Naive thymus-derived CD4-positive, alpha-beta T cell (primary cell): ENCODE measurements at regions of chr3 and their contacts with region 1.

Region 1: DNA sequence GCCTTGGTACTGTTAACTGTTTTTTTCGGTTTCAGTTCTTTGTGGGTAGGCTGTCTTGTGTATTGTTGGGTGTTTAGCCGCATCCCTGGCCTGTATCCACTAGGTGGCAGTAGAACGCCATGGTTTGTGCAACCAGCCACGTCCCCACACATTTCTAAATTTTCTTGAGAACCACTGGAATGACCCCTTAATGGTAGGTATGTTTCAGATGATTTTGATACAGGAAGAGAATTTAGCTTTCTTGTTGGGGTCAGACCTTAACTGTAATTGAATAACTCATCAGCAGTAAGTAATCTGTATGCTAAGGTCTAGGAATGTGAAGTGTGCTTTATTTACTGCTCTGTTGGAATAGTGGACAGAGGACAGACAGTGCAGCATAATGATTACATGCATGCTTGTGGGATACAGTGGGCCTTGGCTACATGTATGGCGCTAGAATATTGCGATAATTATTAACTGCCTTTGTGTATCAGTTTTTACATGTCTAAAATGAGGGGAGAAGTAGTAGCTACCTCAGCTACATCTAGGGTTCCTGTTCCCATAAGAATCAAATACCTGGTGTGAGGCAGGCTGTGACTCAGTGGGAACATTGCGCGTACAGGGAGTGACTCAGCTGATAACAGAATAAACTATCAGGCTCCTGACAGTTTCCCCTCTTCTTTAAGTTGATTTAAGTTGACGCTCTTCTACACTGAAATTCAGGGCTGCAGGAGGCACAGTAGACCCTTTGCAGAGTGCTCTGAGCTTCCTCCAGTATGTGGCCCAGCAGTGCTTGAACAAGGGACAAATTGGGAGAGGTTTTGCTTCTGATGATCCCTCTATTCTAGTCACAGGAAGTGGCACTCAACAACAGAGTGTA is 25.0 kb upstream of the GPR171 start:
- DNase-seq: peak; percentile 47 to 84 (median 77)
- ATAC-seq: peak; percentile 93
- H3K4me3 ChIP-seq: no peak overlapping the region
- H3K4me3 Mint-ChIP-seq: peak overlapping the region in 7 of 10 donors; percentile 6 to 68 (median 35)
- H3K27ac ChIP-seq: no peak overlapping the region
- H3K27ac Mint-ChIP-seq: peak overlapping the region in 8 of 9 donors; percentile 6 to 84 (median 51)
- H3K4me1 ChIP-seq: peaks cover 0 to 9% of the 10 kb centered on the region in 2 donors
- H3K4me1 Mint-ChIP-seq: peaks cover 19 to 63% (median 43%) of the 10 kb centered on the region in 7 donors
- H3K27me3 ChIP-seq: no peaks in the 10 kb centered on the region
- H3K27me3 Mint-ChIP-seq: no peaks in the 10 kb centered on the region

Region 2: GRCh38 chr3:151203051-151203420 is 25.0 kb before region 1 on chr3 and contains the start of gene GPR171:
- CTCF ChIA-PET with region 1: interaction called, 6 read pairs
- POLR2A ChIA-PET with region 1: interaction called, 3 read pairs
- intact Hi-C with region 1: loop called (anchors 1 kb)
- DNase-seq: peak in 8 of 9 donors; percentile 62 to 88 (median 82)
- ATAC-seq: peak; percentile 95
- H3K4me3 ChIP-seq: peak within 1 kb of the TSS; percentile 79
- H3K4me3 Mint-ChIP-seq: peak within 1 kb of the TSS; percentile 72 to 94 (median 84)
- H3K27ac ChIP-seq: peak within 1 kb of the TSS; percentile 75
- H3K27ac Mint-ChIP-seq: peak within 1 kb of the TSS; percentile 76 to 98 (median 94)
- H3K4me1 ChIP-seq: peaks cover 45 to 57% of the 10 kb centered on the region in 2 donors
- H3K4me1 Mint-ChIP-seq: peaks cover 34 to 82% (median 71%) of the 10 kb centered on the region in 7 donors
- H3K27me3 ChIP-seq: no peaks in the 10 kb centered on the region
- H3K27me3 Mint-ChIP-seq: no peaks in the 10 kb centered on the region
- total RNA-seq, gene GPR171: 16.0 to 251 (median 63.4) TPM

Region 3: DNA sequence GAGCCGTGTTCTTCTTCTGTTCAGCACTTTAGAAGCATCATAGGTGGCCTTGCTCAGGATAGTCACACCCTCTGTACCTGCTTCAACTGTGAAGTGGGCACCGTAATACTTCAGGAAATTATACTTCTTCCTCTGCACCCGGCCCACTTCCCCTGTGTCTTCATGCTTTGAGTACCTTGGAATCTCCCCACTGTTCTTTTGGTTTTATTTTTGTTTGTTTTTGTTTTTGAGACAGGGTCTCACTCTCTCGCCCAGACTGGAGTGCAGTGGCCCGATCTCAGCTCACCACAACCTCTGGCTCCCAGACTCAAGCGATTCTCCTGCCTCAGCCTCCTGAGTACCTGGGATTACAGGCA is 48.6 kb after region 1 on chr3:
- CTCF ChIA-PET with region 1: interaction called, 133 read pairs
- POLR2A ChIA-PET with region 1: interaction called, 39 read pairs
- intact Hi-C with region 1: loop called (anchors 1 kb)
- DNase-seq: peak in 8 of 9 donors; percentile 12 to 56 (median 25)
- ATAC-seq: peak; percentile 85
- H3K4me3 ChIP-seq: no peak overlapping the region
- H3K4me3 Mint-ChIP-seq: peak overlapping the region; percentile 8 to 76 (median 44)
- H3K27ac ChIP-seq: no peak overlapping the region
- H3K27ac Mint-ChIP-seq: peak overlapping the region; percentile 1 to 93 (median 67)
- H3K4me1 ChIP-seq: peaks cover 20 to 21% of the 10 kb centered on the region in 2 donors
- H3K4me1 Mint-ChIP-seq: peaks cover 21 to 63% (median 43%) of the 10 kb centered on the region in 7 donors
- H3K27me3 ChIP-seq: no peaks in the 10 kb centered on the region
- H3K27me3 Mint-ChIP-seq: no peaks in the 10 kb centered on the region

Region 4: DNA sequence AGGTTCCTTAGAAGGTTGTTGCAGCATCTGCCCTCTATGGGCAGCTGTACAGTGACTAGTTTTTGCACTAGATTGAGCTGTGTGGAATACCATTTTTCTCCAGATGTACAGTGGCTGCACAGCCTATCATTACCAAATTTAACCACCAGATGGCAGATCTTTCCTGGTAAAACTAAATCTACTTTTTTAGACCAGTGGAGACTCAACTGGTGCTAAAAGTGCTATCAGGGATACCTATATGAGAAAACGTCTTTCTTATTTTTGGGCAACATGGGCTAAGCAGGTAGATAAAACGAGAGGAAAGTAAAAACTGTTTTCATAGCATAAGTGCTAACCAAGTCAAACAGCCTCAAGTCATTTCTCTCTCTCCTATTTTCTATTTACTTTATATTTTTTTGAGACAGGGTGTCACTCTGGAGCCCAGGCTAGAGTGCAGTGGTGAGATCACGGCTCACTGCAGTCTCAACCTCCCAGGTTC is 211.7 kb after region 1 on chr3:
- CTCF ChIA-PET with region 1: no interaction called
- POLR2A ChIA-PET with region 1: no interaction called
- intact Hi-C with region 1: loop called (anchors 1 to 5 kb)
- DNase-seq: peak in 6 of 9 donors; percentile 18 to 33 (median 24)
- ATAC-seq: peak; percentile 65
- H3K4me3 ChIP-seq: no peak overlapping the region
- H3K4me3 Mint-ChIP-seq: no peak overlapping the region
- H3K27ac ChIP-seq: no peak overlapping the region
- H3K27ac Mint-ChIP-seq: no peak overlapping the region
- H3K4me1 ChIP-seq: no peaks in the 10 kb centered on the region
- H3K4me1 Mint-ChIP-seq: no peaks in the 10 kb centered on the region
- H3K27me3 ChIP-seq: no peaks in the 10 kb centered on the region
- H3K27me3 Mint-ChIP-seq: peaks cover 0 to 9% (median 0%) of the 10 kb centered on the region in 5 donors

Region 5: DNA sequence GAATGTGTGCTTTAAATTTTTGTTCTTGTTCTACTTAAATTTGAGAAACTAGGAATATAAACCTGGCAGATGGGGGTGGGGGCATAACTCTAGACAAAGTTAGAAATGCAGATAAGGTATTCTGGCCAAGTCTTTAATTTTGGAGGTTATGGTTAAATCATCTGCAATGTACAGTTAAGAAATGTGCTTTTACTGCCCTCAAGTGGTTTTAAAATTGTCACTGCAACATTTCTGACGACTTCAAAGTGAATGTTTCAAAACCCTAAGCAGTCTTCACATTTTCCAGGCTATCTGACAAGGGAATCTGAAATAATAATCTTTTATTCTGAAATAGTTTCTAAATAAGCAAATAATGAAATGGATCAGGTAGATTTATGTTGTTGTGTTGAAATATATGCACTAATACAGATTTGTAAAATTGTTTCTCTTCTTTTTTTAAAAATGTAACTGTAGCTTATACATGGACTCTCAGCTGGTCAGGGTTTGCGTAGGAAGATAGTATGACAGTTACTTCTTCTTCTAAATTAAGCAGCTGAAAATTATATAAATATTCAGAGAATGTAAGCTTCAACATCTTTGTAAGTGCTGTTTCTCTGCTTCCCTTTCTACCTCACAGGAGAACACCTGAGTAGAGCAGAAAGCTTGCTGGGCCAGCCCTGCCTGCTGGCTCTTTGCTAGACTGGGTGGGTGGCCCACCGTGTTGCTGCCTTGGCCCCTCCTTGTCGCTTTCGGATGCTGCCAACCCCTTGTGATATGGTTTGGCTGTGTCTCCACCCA is 690.4 kb after region 1 on chr3:
- CTCF ChIA-PET with region 1: no interaction called
- POLR2A ChIA-PET with region 1: no interaction called
- intact Hi-C with region 1: loop called (anchors 1 to 2 kb)
- DNase-seq: peak in 5 of 9 donors; percentile 11 to 40 (median 21)
- ATAC-seq: peak; percentile 57
- H3K4me3 ChIP-seq: no peak overlapping the region
- H3K4me3 Mint-ChIP-seq: no peak overlapping the region
- H3K27ac ChIP-seq: no peak overlapping the region
- H3K27ac Mint-ChIP-seq: no peak overlapping the region
- H3K4me1 ChIP-seq: no peaks in the 10 kb centered on the region
- H3K4me1 Mint-ChIP-seq: no peaks in the 10 kb centered on the region
- H3K27me3 ChIP-seq: no peaks in the 10 kb centered on the region
- H3K27me3 Mint-ChIP-seq: peaks cover 0 to 7% (median 0%) of the 10 kb centered on the region in 5 donors